Activated naive CD4-positive, alpha-beta T cell treated with anti-CD3 and anti-CD28 coated beads, Interleukin-2, amount 10 ng/mL, durations not matched to agents 7 days and 5 days (primary cell): ENCODE measurements at regions of chr20 and their contacts with region 1.

Region 1: GRCh38 chr20:51014797-51015722 is 7.8 kb downstream of the KCNG1 start:
- DNase-seq: peak; percentile 42
- H3K4me3 Mint-ChIP-seq: no peak overlapping the region
- H3K27ac Mint-ChIP-seq: no peak overlapping the region
- H3K4me1 Mint-ChIP-seq: no peaks in the 10 kb centered on the region
- H3K27me3 Mint-ChIP-seq: peaks cover 66% of the 10 kb centered on the region

Region 2: GRCh38 chr20:51029963-51030920 is 15.2 kb after region 1 on chr20:
- CTCF ChIA-PET with region 1: interaction called, 22 read pairs
- DNase-seq: no peak
- H3K4me3 Mint-ChIP-seq: no peak overlapping the region
- H3K27ac Mint-ChIP-seq: no peak overlapping the region
- H3K4me1 Mint-ChIP-seq: no peaks in the 10 kb centered on the region
- H3K27me3 Mint-ChIP-seq: peaks cover 82% of the 10 kb centered on the region